ENCODE measurements at regions of chr1 and their contacts with region 1.

Region 1: GRCh38 chr1:155911156-155912055 is at the start of gene RIT1:
- DNase-seq: peak; percentile 93
- ATAC-seq: peak; percentile 85
- H3K4me3 Mint-ChIP-seq: peak within 1 kb of the TSS; percentile 85
- H3K27ac Mint-ChIP-seq: peak within 1 kb of the TSS; percentile 92
- H3K4me1 Mint-ChIP-seq: peaks cover 19% of the 10 kb centered on the region
- H3K27me3 Mint-ChIP-seq: no peaks in the 10 kb centered on the region
- total RNA-seq, gene RIT1: 20.3 to 23.0 TPM

Region 2: GRCh38 chr1:155261852-155262673 is 649.3 kb before region 1 on chr1 and contains the start of gene SCAMP3:
- CTCF ChIA-PET with region 1: no interaction called
- POLR2A ChIA-PET with region 1: no interaction called
- intact Hi-C with region 1: loop called in 1 of 2 experiments (anchors 2 kb)
- DNase-seq: peak; percentile 93
- ATAC-seq: peak; percentile 95
- H3K4me3 Mint-ChIP-seq: peak within 1 kb of the TSS; percentile 98
- H3K27ac Mint-ChIP-seq: peak within 1 kb of the TSS; percentile 91
- H3K4me1 Mint-ChIP-seq: peaks cover 27% of the 10 kb centered on the region
- H3K27me3 Mint-ChIP-seq: no peaks in the 10 kb centered on the region
- total RNA-seq, gene SCAMP3: 82.0 to 95.5 TPM

Region 3: GRCh38 chr1:155360051-155360450 is 551.4 kb before region 1 on chr1:
- CTCF ChIA-PET with region 1: no interaction called
- POLR2A ChIA-PET with region 1: no interaction called
- intact Hi-C with region 1: no loop called
- DNase-seq: no peak
- ATAC-seq: no peak
- H3K4me3 Mint-ChIP-seq: no peak overlapping the region
- H3K27ac Mint-ChIP-seq: no peak overlapping the region
- H3K4me1 Mint-ChIP-seq: no peaks in the 10 kb centered on the region
- H3K27me3 Mint-ChIP-seq: no peaks in the 10 kb centered on the region

Region 4: DNA sequence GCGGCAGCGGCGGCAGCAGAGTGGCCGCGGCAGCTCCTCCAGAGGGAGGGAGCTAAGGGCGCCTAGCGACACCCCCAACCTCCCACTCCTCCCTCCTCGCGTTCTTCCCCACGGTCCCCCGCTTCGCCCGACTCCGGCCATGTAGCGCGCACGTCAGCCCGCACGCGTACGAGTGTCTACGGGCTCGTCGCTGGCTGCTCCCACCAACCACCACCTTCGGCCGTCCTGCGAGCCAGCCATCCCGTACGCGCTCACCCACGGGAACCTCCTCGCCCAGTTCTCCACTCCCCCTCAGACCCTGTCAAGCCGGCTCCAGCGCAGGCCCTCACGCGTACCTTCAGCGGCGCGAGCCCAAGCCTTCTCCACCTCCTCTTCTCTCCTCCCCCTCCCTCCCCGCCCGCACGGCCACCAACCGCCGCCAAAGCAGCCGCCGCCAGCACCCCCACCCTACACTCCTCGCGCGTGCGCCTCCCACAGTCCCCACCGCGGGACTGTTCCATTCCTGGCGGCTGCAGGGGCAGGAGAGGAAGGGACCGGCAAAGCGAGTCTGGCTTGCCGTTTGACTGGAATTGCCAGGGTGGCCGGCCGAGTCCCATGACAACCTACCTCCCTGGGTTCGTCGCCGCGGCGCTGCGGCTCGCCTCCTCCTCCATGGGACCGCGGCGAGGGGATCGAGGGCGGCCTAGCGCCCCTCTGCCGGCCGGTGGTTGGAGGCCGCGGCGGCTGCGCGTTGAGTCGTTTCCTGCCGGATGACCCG is 222.9 kb before region 1 on chr1 and contains the start of gene YY1AP1:
- CTCF ChIA-PET with region 1: no interaction called
- POLR2A ChIA-PET with region 1: no interaction called
- intact Hi-C with region 1: loop called in 1 of 2 experiments (anchors 5 kb)
- DNase-seq: peak; percentile 95
- ATAC-seq: peak; percentile 86
- H3K4me3 Mint-ChIP-seq: peak within 1 kb of the TSS; percentile 97
- H3K27ac Mint-ChIP-seq: peak within 1 kb of the TSS; percentile 94
- H3K4me1 Mint-ChIP-seq: peaks cover 29% of the 10 kb centered on the region
- H3K27me3 Mint-ChIP-seq: no peaks in the 10 kb centered on the region
- total RNA-seq, gene YY1AP1: 59.6 to 76.0 TPM

Region 5: GRCh38 chr1:155744711-155745283 is 166.6 kb before region 1 on chr1:
- CTCF ChIA-PET with region 1: no interaction called
- POLR2A ChIA-PET with region 1: no interaction called
- intact Hi-C with region 1: loop called in 1 of 2 experiments (anchors 1 kb)
- DNase-seq: no peak
- ATAC-seq: no peak
- H3K4me3 Mint-ChIP-seq: peak overlapping the region; percentile 90
- H3K27ac Mint-ChIP-seq: peak overlapping the region; percentile 78
- H3K4me1 Mint-ChIP-seq: peaks cover 4% of the 10 kb centered on the region
- H3K27me3 Mint-ChIP-seq: no peaks in the 10 kb centered on the region

Region 6: DNA sequence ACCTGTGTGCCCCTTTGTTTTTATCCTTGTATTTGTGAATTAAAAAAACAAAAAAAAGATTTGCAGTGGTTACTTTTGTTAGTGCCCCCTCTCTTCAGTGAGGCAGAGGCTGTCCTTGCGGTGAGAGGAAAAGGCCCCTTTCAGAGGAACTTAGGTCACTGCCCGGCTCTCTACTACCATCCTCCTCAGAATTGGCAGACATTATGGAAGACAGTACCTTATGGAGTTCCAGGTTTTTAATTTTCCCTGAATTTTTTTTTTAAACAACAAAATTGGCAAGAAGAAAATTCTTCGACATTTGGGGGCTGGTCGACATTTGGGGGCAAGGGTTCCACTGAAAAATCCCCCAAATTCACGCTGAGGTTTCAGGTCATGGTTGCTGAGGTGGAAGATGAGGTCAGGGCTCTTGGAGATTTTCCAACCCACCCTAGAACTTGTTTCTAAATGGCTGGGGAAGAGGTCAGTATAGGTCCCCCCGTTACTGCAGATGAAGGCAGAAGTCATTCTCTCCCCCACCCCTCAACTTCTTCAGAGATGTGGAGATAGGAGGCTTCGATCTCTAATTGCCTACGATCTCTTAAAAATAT is 35.3 kb after region 1 on chr1:
- CTCF ChIA-PET with region 1: interaction called, 4 read pairs
- POLR2A ChIA-PET with region 1: interaction called, 3 read pairs
- intact Hi-C with region 1: loop called in 1 of 2 experiments (anchors 1 kb)
- DNase-seq: no peak
- ATAC-seq: peak; percentile 13
- H3K4me3 Mint-ChIP-seq: peak overlapping the region; percentile 58
- H3K27ac Mint-ChIP-seq: peak overlapping the region; percentile 96
- H3K4me1 Mint-ChIP-seq: peaks cover 50% of the 10 kb centered on the region
- H3K27me3 Mint-ChIP-seq: no peaks in the 10 kb centered on the region

Region 7: GRCh38 chr1:155978325-155978972 is 67.0 kb after region 1 on chr1 and contains the start of gene ARHGEF2:
- CTCF ChIA-PET with region 1: no interaction called
- POLR2A ChIA-PET with region 1: interaction called, 3 read pairs
- intact Hi-C with region 1: loop called (anchors 1 kb)
- DNase-seq: peak; percentile 88
- ATAC-seq: peak; percentile 57
- H3K4me3 Mint-ChIP-seq: peak within 1 kb of the TSS; percentile 100
- H3K27ac Mint-ChIP-seq: peak within 1 kb of the TSS; percentile 96
- H3K4me1 Mint-ChIP-seq: peaks cover 68% of the 10 kb centered on the region
- H3K27me3 Mint-ChIP-seq: no peaks in the 10 kb centered on the region
- total RNA-seq, gene ARHGEF2: 135 to 216 TPM

Region 8: DNA sequence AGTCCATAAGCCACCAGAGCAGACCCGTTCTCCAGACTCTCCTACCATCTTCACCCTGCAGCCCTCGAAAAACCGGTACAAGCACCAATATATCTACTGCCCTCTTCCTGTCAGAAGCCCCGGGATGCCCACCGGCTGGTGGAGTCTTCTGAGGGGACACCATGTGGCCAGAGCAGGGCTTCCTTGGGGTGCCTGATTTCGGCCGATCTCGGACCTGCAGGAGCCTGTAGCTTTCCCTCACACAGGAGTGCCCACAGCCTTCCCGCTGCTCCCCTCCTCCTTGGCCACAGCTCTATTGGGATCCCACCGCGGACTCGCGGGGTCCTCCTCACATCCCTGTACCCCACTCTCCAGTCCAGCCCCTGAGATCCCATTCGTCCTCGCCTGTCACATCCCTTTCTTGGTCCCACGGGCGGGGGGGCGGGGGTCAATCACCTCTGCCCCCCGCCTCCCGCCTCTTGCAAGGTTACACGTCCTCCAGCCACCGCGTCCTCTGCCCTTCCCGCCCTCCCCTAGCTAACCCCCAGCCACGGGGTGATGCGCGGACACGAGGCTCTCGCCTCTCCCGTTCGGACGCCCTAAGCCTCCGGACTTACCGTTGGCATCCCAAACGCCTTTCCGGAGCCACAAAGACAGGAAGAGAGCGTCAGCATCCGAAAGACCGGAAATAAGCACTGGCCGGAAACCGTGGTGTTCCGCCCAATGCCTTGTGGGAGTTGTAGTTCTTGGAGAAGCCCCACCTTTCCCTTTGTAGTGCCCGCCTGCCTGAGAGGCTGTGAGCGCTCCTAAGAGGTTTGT is 109.1 kb after region 1 on chr1 and contains the start of gene SSR2:
- CTCF ChIA-PET with region 1: interaction called, 5 read pairs
- POLR2A ChIA-PET with region 1: no interaction called
- intact Hi-C with region 1: loop called in 1 of 2 experiments (anchors 1 kb)
- DNase-seq: peak; percentile 92
- ATAC-seq: peak; percentile 100
- H3K4me3 Mint-ChIP-seq: peak within 1 kb of the TSS; percentile 94
- H3K27ac Mint-ChIP-seq: peak within 1 kb of the TSS; percentile 96
- H3K4me1 Mint-ChIP-seq: peaks cover 20% of the 10 kb centered on the region
- H3K27me3 Mint-ChIP-seq: peaks cover 4% of the 10 kb centered on the region
- total RNA-seq, gene SSR2: 143 to 197 TPM

Region 9: DNA sequence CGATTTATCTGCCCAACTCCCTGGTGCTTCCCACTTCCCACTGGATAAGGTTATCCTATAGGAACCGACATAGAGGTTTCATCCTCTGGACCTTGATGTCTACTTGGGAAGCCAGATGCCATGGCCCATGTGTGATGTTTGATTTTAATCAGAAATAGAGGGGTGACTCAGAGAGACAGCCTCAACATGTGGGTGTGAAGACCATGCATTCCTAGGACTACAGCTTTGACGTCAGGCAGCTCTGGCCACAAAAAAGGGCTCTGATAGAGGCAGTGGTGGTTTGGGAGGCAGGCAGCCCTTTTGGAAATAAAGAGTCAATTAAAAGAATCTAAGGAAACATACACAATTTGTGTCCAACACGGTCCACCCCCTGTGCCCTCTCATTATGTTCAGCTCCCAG is 910.4 kb after region 1 on chr1:
- CTCF ChIA-PET with region 1: no interaction called
- POLR2A ChIA-PET with region 1: no interaction called
- intact Hi-C with region 1: no loop called
- DNase-seq: peak; percentile 75
- ATAC-seq: peak; percentile 86
- H3K4me3 Mint-ChIP-seq: no peak overlapping the region
- H3K27ac Mint-ChIP-seq: peak overlapping the region; percentile 70
- H3K4me1 Mint-ChIP-seq: peaks cover 36% of the 10 kb centered on the region
- H3K27me3 Mint-ChIP-seq: no peaks in the 10 kb centered on the region

Measured in activated CD4-positive, alpha-beta T cell treated with anti-CD3 and anti-CD28 coated beads for 36 hours (primary cell).